ENCODE measurements at regions of chr1 and their contacts with region 1.

Region 1: DNA sequence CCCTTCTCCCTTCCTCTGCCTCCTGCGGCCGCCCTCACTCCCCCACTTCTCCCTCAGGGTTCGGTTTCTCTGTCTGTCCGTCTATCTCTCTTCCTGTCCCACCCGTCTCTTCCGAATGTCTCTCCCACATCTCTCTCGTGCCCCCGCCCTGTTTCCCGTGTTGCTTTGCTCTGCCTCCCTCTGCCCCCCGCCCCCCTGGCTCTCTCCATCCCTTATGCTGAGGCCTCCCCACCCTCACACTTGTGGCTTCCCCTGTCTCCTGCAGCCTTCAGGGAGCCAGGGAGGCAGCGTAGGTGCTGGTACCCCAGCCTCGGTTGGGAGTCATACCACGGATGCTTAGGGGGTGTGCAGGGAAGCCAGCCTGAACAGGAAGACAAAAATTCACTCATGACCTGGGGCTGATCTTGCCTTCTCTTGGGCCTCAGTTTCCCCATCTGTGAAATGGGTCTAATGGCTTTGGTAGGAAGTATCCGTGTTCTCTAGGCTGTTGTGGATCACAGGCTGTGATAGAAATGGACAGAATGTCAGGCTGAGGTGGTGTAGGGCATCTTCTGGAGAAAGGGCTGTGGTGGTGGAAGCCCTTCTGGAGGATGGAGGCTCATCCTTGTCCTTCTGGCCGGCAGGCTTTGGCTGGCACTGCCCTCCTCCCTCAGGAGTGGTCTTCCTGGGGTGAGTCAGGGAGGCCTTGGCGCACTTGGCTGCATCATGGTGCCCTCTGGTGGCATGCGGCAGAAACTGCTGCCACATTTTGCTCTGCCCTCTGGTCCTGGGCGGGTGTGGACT is 55.5 kb downstream of the FOXO6 start:
- DNase-seq: peak; percentile 63
- H3K4me3 ChIP-seq: no peak overlapping the region
- H3K27ac ChIP-seq: no peak overlapping the region
- H3K4me1 ChIP-seq: peaks cover 0 to 21% (median 6%) of the 10 kb centered on the region in 4 donors
- H3K27me3 ChIP-seq: no peaks in the 10 kb centered on the region
- CTCF ChIP-seq: peak; percentile 87 to 94 (median 92)
- EP300 ChIP-seq: no peak
- POLR2A ChIP-seq: no peak

Region 2: DNA sequence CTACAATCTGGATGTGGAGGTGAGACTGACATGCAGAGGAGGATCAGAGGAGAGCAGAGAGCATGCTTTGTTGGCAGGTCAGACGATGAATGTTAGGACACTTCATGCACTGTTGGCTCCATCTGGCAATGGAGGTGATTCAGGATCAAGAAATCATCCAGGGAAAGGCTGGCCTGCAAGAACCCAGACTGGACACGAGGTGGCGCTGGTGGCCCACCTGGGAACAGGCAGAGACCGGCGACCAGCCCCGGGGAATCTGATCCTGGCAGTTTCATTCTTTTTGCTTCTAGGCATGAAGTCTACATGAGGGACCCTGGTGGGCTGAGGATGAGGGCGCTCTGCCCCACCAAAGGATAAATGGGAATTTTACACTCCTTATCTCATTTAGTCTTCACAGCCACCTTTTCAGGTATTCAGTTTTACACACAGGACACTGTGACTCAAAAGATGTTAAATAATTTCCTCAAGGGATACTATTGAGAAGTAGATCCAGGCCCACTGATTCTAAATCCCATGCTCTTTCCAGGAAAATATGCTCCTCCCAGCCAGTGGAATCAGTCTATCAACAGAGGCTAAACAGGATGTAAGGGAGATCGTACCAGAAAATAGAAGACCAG is 148.5 kb before region 1 on chr1:
- in situ Hi-C with region 1: loop called in 1 of 4 experiments (anchors 10 kb)
- intact Hi-C with region 1: loop called (anchors 2 kb)
- DNase-seq: peak; percentile 78
- H3K4me3 ChIP-seq: no peak overlapping the region
- H3K27ac ChIP-seq: no peak overlapping the region
- H3K4me1 ChIP-seq: no peaks in the 10 kb centered on the region
- H3K27me3 ChIP-seq: no peaks in the 10 kb centered on the region
- CTCF ChIP-seq: peak; percentile 93 to 99 (median 98)
- EP300 ChIP-seq: no peak
- POLR2A ChIP-seq: no peak

Region 3: GRCh38 chr1:41282679-41283317 is 133.9 kb before region 1 on chr1:
- in situ Hi-C with region 1: loop called in 2 of 4 experiments (anchors 10 kb)
- intact Hi-C with region 1: loop called (anchors 5 kb)
- DNase-seq: peak; percentile 27
- H3K4me3 ChIP-seq: no peak overlapping the region
- H3K27ac ChIP-seq: no peak overlapping the region
- H3K4me1 ChIP-seq: no peaks in the 10 kb centered on the region
- H3K27me3 ChIP-seq: peaks cover 12% of the 10 kb centered on the region
- CTCF ChIP-seq: peak; percentile 60 to 76 (median 71)
- EP300 ChIP-seq: no peak
- POLR2A ChIP-seq: no peak

Region 4: GRCh38 chr1:41322835-41323627 is 93.7 kb before region 1 on chr1:
- in situ Hi-C with region 1: loop called in 3 of 4 experiments (anchors 10 kb)
- intact Hi-C with region 1: no loop called
- DNase-seq: peak; percentile 56
- H3K4me3 ChIP-seq: no peak overlapping the region
- H3K27ac ChIP-seq: no peak overlapping the region
- H3K4me1 ChIP-seq: peaks cover 0 to 6% (median 3%) of the 10 kb centered on the region in 4 donors
- H3K27me3 ChIP-seq: no peaks in the 10 kb centered on the region
- CTCF ChIP-seq: peak; percentile 21 to 74 (median 47)
- EP300 ChIP-seq: no peak
- POLR2A ChIP-seq: no peak